ENCODE measurements at regions of chr2 and their contacts with region 1.

Region 1: GRCh38 chr2:148644883-148645538 is 460 bp downstream of the EPC2 start:
- DNase-seq: peak; percentile 90 to 95 (median 93)
- H3K4me3 ChIP-seq: peak overlapping the region; percentile 85
- H3K4me3 Mint-ChIP-seq: peak overlapping the region; percentile 87 to 99 (median 94)
- H3K27ac ChIP-seq: peak overlapping the region; percentile 86
- H3K27ac Mint-ChIP-seq: peak overlapping the region; percentile 88 to 99 (median 96)
- H3K4me1 ChIP-seq: peaks cover 46% of the 10 kb centered on the region
- H3K4me1 Mint-ChIP-seq: peaks cover 37 to 50% (median 49%) of the 10 kb centered on the region in 3 donors
- H3K27me3 ChIP-seq: no peaks in the 10 kb centered on the region
- H3K27me3 Mint-ChIP-seq: peaks cover 8 to 14% of the 10 kb centered on the region in 2 donors

Region 2: DNA sequence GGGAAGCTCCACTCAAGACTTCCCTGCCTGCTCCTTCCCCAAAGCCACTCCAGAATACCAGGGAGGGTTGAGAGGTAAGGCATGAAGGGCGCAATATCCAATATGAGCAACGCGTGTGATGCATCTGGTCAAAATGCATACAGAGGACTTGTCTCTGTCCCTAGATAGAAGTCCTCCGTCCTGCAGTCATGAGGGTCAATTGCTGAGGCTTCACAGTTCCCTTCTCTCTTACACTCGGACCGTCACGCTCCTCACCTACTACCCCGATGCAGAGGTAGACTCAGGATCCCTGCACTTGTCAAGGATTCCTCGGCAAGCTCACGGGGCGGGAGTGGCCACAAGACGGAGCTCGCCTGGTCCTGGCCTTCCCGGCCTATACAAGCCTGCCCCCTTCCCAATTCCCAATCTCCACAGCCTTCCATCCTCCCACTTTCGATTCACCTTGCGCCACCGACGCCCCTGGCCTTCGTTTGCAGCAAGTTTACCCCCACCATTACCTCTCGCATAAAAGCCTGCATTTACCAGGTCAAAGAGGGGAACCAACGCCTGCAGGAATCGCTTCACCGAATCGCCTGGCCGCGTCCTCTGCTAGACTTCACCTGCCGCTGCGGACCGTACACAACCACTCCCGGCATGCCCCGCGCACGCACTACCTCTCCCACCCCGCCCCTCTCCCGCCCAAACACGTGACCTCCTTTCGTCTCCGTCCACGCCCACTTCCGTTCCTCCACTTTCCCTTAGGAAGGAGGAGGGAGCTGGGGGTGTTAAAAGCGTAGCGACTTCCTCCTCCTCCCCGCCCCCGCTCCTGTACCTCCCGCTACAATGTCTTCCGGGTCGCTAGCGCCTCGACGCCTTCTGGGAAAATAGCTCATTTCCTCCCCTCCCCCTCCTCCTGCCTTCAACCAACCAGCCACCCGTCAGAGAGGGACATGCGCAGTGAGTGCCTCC is 624.6 kb before region 1 on chr2 and contains the start of gene ORC4:
- CTCF ChIA-PET with region 1: interaction called, 3 read pairs
- POLR2A ChIA-PET with region 1: interaction called, 36 read pairs
- DNase-seq: peak; percentile 95 to 97 (median 97)
- H3K4me3 ChIP-seq: peak within 1 kb of the TSS; percentile 79
- H3K4me3 Mint-ChIP-seq: peak within 1 kb of the TSS; percentile 93 to 100 (median 100)
- H3K27ac ChIP-seq: peak within 1 kb of the TSS; percentile 84
- H3K27ac Mint-ChIP-seq: peak within 1 kb of the TSS; percentile 90 to 99 (median 98)
- H3K4me1 ChIP-seq: peaks cover 31% of the 10 kb centered on the region
- H3K4me1 Mint-ChIP-seq: peaks cover 64 to 86% (median 72%) of the 10 kb centered on the region in 3 donors
- H3K27me3 ChIP-seq: no peaks in the 10 kb centered on the region
- H3K27me3 Mint-ChIP-seq: peaks cover 0 to 3% of the 10 kb centered on the region in 2 donors
- total RNA-seq, gene ORC4: 34.8 to 35.4 TPM

Region 3: GRCh38 chr2:148259674-148260073 is 385.3 kb before region 1 on chr2:
- CTCF ChIA-PET with region 1: no interaction called
- POLR2A ChIA-PET with region 1: no interaction called
- DNase-seq: no peak
- H3K4me3 ChIP-seq: no peak overlapping the region
- H3K4me3 Mint-ChIP-seq: no peak overlapping the region
- H3K27ac ChIP-seq: no peak overlapping the region
- H3K27ac Mint-ChIP-seq: no peak overlapping the region
- H3K4me1 ChIP-seq: no peaks in the 10 kb centered on the region
- H3K4me1 Mint-ChIP-seq: peaks cover 0 to 7% (median 0%) of the 10 kb centered on the region in 3 donors
- H3K27me3 ChIP-seq: no peaks in the 10 kb centered on the region
- H3K27me3 Mint-ChIP-seq: no peaks in the 10 kb centered on the region

Region 4: DNA sequence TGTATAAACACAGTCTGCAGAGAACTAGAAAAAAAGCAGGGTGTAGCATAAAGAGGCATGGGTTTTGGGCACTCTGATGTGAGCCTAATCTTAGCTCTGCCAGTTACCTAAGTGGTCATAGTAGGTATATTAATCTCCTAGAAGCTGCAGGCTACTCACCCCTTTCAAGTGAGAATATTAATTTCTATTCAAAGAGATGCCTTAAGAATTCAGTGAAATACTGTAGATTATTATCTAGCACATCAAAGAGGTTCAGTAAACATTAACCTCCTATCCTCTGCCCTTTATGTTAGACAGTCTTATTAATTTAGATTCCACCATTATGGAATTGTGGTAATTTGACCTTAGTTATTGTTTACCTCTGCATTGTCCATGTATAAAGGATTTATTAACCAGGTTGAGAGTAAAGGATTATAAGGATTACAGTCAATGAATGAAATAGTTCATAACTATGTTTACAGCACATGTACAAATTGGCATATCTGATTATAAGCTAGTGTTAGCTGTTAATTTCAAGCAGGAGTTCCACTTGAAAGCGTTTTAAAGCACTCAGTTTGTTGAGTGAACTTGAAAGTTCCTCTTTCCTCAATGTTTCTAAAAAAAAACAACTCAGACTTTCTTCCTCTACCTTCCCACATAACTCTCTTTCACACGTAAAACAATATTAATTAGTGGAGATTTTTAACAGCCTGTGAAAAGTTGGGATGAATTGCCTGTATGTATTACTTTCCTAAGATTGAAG is 151.0 kb before region 1 on chr2:
- CTCF ChIA-PET with region 1: no interaction called
- POLR2A ChIA-PET with region 1: interaction called, 11 read pairs
- DNase-seq: no peak
- H3K4me3 ChIP-seq: no peak overlapping the region
- H3K4me3 Mint-ChIP-seq: no peak overlapping the region
- H3K27ac ChIP-seq: no peak overlapping the region
- H3K27ac Mint-ChIP-seq: no peak overlapping the region
- H3K4me1 ChIP-seq: no peaks in the 10 kb centered on the region
- H3K4me1 Mint-ChIP-seq: no peaks in the 10 kb centered on the region
- H3K27me3 ChIP-seq: no peaks in the 10 kb centered on the region
- H3K27me3 Mint-ChIP-seq: no peaks in the 10 kb centered on the region

Region 5: DNA sequence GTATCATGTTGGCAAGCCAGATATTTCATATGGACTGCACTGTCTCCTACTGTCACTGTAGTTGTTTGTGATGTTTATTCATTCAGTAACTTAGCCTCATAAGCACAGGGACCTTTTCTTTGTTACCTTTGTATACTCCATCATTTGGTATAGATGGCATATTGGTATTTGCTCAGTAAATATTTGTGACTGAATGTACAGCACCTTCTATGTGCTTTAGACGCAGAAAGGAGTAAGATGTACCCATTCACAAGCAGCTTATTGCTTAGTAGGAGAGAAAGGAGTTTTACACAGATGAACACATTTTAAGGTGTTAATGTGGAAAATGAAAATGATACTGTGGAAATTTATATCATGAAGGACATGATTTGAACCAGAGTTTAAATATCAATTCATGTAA is 11.5 kb after region 1 on chr2:
- CTCF ChIA-PET with region 1: interaction called, 10 read pairs
- POLR2A ChIA-PET with region 1: interaction called, 9 read pairs
- DNase-seq: no peak
- H3K4me3 ChIP-seq: no peak overlapping the region
- H3K4me3 Mint-ChIP-seq: peak overlapping the region in 1 of 7 donors; percentile 32
- H3K27ac ChIP-seq: no peak overlapping the region
- H3K27ac Mint-ChIP-seq: peak overlapping the region in 7 of 8 donors; percentile 12 to 83 (median 54)
- H3K4me1 ChIP-seq: peaks cover 81% of the 10 kb centered on the region
- H3K4me1 Mint-ChIP-seq: peaks cover 88 to 99% (median 98%) of the 10 kb centered on the region in 3 donors
- H3K27me3 ChIP-seq: no peaks in the 10 kb centered on the region
- H3K27me3 Mint-ChIP-seq: no peaks in the 10 kb centered on the region

Region 6: DNA sequence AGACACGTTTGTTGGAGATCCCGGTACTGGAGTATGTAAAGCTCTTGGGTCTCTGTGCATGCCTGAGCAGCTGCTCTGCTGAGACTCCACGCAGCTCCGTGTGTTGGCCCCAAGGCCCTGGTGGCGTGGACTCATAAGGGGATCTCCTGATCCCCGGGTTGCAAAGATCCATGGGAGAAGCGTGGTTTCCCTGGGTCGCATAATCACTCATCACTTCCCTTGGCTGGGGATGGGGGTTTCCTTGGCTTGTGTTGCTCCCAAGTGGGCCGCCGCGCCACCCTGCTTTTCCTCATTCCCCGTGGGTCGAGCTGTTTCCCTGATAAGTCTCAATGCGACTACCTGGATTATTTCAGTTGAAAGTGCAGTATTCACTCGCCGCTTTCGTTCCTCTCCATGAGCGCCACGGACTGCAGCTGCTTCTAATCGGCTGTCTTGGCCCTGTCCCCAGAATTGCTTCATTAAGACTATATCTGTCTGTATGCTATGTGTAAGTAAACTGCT is 75.5 kb after region 1 on chr2:
- CTCF ChIA-PET with region 1: no interaction called
- POLR2A ChIA-PET with region 1: interaction called, 12 read pairs
- DNase-seq: no peak
- H3K4me3 ChIP-seq: no peak overlapping the region
- H3K4me3 Mint-ChIP-seq: peak overlapping the region in 5 of 7 donors; percentile 1 to 36 (median 18)
- H3K27ac ChIP-seq: no peak overlapping the region
- H3K27ac Mint-ChIP-seq: peak overlapping the region in 4 of 8 donors; percentile 28 to 64 (median 40)
- H3K4me1 ChIP-seq: peaks cover 26% of the 10 kb centered on the region
- H3K4me1 Mint-ChIP-seq: peaks cover 94 to 98% (median 97%) of the 10 kb centered on the region in 3 donors
- H3K27me3 ChIP-seq: no peaks in the 10 kb centered on the region
- H3K27me3 Mint-ChIP-seq: no peaks in the 10 kb centered on the region

Region 7: GRCh38 chr2:148874868-148875341 is 229.9 kb after region 1 on chr2 and contains the start of gene KIF5C:
- CTCF ChIA-PET with region 1: no interaction called
- POLR2A ChIA-PET with region 1: interaction called, 17 read pairs
- DNase-seq: peak; percentile 77 to 91 (median 80)
- H3K4me3 ChIP-seq: peak within 1 kb of the TSS; percentile 55
- H3K4me3 Mint-ChIP-seq: peak within 1 kb of the TSS; percentile 87 to 96 (median 88)
- H3K27ac ChIP-seq: no peak within 1 kb of the TSS
- H3K27ac Mint-ChIP-seq: peak within 1 kb of the TSS; percentile 61 to 94 (median 90)
- H3K4me1 ChIP-seq: peaks cover 5% of the 10 kb centered on the region
- H3K4me1 Mint-ChIP-seq: peaks cover 17 to 21% (median 20%) of the 10 kb centered on the region in 3 donors
- H3K27me3 ChIP-seq: peaks cover 5% of the 10 kb centered on the region
- H3K27me3 Mint-ChIP-seq: peaks cover 26 to 45% of the 10 kb centered on the region in 2 donors
- total RNA-seq, gene KIF5C: 18.2 to 19.8 TPM